AG04449 (cell line): ENCODE measurements at regions of chr19 and their contacts with region 1.

Region 1: DNA sequence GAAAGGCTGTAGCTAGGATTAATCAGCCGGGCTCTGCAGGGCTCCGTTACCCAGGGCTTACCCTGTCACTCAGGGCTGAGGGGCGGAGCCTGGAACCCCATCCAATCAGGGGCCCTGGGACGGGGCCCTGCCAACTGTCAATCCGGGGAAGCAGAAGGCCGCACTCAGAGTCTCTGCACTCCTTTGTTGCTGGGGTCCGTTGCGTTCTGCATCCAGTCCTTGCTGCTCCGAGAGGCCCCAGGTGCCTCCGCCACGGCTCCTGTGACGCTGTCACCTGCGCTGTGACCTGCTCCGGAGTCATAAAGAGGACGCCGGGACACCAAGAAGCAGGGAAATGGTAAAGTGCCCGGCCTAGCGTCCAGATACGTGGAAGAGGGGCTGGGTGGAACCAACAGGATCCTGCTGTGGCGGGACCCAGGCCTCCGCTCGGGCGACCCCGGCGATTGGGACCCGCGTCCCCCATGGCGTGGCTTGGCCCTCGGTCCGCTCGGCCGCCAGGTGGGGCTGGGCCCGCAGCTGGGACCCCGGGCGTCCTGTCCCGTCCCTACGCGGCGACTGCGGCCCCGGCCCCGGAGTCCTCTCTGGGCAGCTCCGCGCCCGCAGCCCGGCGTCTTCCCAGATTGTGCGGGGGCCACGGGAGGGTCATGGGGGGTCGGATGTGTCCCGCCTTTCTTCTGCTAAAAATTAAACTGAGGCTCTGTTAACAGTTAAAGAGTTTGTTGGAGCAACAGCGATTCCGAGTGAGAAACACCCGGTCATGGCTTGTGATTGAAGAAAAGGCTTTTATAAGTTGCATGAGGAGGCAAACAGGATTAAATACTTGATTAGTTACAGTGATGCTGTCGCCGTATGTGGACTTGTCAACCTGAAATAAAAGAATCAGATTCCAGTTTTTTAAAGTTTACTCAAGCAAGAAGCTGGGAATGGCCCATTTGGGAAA is at the start of gene ZNF491:
- DNase-seq: peak; percentile 34
- H3K4me3 ChIP-seq: peak within 1 kb of the TSS; percentile 81
- CTCF ChIP-seq: peak; percentile 50

Region 2: DNA sequence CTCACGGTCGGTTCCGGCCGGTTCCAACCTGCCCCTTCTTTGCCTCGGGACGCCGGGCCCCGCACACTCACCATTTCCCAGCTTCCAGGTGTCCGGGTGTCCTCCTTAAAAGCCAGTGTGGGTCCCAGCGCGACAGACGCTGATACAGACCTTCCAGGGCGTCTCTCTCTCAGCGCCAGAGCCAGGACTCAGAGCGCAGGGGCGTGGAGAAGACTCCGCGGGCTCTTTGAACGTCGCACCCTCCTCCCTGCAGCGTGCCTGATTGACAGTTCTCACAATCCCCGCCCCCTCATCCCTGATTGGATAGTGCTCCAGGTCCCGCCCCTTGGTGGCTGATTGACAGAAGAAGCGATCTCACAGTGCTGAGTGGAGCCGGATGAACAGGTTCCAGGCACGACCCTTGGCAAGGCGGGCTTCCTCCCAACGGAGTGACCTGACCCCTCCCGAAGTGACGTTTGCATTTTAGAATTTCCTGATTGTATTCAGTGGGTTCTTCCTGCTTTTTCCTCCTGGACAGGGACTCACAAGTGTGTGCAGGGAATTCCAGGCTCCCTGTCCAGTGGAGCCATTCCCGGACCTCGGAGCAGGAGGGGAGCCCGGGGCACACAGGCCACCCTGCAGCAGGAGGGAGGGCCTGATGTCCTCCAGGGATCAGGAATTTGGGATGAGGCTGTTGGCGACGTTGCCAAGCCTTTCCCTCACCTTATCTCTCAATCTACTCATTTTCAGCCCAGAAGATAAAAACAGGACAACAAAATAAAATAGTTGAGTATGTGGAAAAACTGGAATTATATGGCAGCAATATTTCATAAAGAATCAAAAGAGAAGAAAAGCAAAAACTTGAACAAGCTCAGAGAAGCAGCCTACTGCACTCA is 59.7 kb before region 1 on chr19 and contains the start of gene ZNF823:
- CTCF ChIA-PET with region 1: interaction called, 14 read pairs
- POLR2A ChIA-PET with region 1: no interaction called
- DNase-seq: peak; percentile 79
- H3K4me3 ChIP-seq: peak within 1 kb of the TSS; percentile 75
- CTCF ChIP-seq: no peak

Region 3: DNA sequence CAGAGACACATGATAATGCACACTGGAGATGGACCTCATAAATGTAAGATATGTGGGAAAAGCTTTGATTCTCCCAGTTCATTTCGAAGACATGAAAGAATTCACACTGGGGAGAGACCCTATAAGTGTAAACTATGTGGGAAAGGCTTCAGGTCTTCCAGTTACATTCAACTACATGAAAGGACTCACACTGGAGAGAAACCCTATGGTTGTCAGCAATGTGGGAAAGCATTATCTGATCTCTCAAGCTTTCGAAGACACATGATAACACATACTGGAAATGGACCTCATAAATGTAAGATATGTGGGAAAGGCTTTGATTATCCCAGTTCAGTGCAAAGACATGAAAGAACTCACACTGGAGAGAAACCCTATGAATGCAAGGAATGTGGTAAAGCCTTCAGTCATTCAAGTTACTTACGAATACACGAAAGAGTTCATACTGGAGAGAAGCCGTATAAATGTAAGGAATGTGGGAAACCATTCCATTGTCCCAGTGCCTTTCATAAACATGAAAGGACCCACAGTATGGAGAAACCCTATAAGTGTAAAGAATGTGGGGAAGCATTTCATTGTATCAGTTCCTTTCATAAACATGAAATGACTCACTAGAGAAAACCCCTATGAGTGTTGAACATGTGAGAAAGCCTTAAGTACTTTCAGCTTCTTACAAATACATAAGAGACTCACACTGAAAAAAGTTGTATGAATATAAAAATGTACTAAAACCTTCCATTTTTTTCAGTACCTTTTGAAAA is 17.2 kb before region 1 on chr19:
- CTCF ChIA-PET with region 1: interaction called, 31 read pairs
- POLR2A ChIA-PET with region 1: no interaction called
- DNase-seq: no peak
- H3K4me3 ChIP-seq: no peak overlapping the region
- CTCF ChIP-seq: no peak

Region 4: DNA sequence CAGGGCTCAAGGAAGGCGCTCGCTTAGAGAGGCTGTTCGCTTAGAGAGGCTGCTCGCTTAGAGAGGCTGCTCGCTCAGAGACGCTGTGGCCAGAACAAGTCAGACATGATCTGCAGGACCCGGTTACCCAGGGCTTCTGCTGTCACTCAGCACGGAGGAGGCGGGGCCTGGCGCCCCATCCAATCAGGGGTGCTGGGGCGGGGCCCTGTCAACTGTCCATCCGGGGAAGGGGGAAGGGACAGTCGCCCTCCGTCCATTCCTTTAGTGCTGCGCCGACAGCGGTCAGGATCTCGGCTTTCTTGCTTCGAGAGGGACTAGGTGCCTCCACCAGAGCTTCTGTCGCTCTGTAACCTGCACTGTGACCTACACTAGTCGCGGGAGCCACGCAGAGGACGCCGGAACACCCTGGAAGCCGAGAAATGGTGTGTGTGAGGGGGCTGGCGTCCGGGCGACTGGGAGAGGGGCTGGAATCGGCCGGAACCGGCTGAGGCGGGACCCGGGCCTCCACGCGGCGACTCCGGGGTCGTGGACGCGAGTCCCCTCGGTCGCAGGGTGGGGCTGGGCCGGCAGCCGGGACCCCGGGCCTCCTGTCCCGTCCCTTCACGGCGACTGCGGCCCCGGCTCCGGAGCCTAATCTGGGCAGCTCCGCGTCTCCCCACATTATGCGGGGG is 15.5 kb after region 1 on chr19 and contains the start of gene ZNF440:
- CTCF ChIA-PET with region 1: interaction called, 95 read pairs
- POLR2A ChIA-PET with region 1: interaction called, 4 read pairs
- DNase-seq: peak; percentile 66
- H3K4me3 ChIP-seq: peak within 1 kb of the TSS; percentile 90
- CTCF ChIP-seq: no peak

Region 5: GRCh38 chr19:11843722-11844121 is 45.1 kb after region 1 on chr19:
- CTCF ChIA-PET with region 1: no interaction called
- POLR2A ChIA-PET with region 1: no interaction called
- DNase-seq: no peak
- H3K4me3 ChIP-seq: no peak overlapping the region
- CTCF ChIP-seq: no peak

Region 6: GRCh38 chr19:11924886-11925650 is 126.4 kb after region 1 on chr19 and contains the start of gene ZNF700:
- CTCF ChIA-PET with region 1: interaction called, 10 read pairs
- POLR2A ChIA-PET with region 1: interaction called, 3 read pairs
- DNase-seq: no peak
- H3K4me3 ChIP-seq: peak within 1 kb of the TSS; percentile 95
- CTCF ChIP-seq: no peak

Region 7: GRCh38 chr19:12139885-12140547 is 341.4 kb after region 1 on chr19 and contains the start of gene ZNF20:
- CTCF ChIA-PET with region 1: interaction called, 15 read pairs
- POLR2A ChIA-PET with region 1: interaction called, 3 read pairs
- DNase-seq: peak; percentile 44
- H3K4me3 ChIP-seq: peak within 1 kb of the TSS; percentile 86
- CTCF ChIP-seq: no peak